ENCODE measurements at regions of chr16 and their contacts with region 1.

Region 1: DNA sequence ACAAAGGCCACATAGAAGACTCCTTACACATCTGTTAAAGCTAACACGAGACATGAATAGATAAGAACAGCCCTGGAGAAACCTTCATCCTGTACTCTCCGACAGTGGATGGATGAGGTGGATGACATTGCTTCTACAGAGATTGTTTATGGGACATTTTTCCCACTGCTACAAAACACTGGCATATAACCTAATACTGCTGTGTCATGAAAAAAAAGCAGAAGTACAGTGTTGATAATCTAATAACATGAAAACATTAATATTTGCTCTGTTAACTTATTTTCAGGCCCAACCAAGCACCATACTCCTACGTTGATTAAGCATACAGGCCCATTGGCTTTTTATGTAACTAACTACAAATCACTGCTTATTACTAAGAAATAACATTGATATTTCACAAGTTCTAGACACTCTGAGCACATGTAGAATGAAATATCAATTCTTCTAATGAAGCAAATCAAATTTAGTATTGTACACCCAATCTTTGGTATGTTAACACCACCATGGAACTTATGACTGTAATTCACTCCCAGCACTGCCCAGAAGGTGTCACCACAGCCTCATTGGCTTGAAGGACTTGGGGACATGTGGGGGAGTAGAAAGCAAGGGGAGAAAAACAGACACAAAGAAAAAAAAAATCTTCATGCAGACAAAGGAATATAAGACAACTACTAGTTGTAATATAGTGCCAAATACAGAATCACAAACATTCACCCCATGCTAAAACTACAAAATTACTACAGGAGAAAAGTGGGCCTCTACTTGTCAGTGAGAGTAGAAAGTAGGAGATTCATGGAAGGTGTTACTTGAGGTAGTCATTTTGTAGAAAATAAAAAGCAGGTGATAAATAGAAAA is 330.0 kb upstream of the PMFBP1 start:
- DNase-seq: peak; percentile 79
- ATAC-seq: peak; percentile 99
- H3K4me3 ChIP-seq: no peak overlapping the region
- H3K27ac ChIP-seq: no peak overlapping the region
- H3K4me1 ChIP-seq: no peaks in the 10 kb centered on the region
- H3K27me3 ChIP-seq: no peaks in the 10 kb centered on the region
- CTCF ChIP-seq: peak; percentile 96
- POLR2A ChIP-seq: 0 out of 2 replicates have a peak, but pooled peaks have one; percentile 35
- RAD21 ChIP-seq: peak; percentile 95

Region 2: GRCh38 chr16:72689851-72690250 is 187.9 kb after region 1 on chr16:
- CTCF ChIA-PET with region 1: no interaction called
- POLR2A ChIA-PET with region 1: no interaction called
- dilution Hi-C with region 1: no loop called
- in situ Hi-C with region 1: no loop called
- intact Hi-C with region 1: no loop called
- DNase-seq: peak; percentile 17
- ATAC-seq: no peak
- H3K4me3 ChIP-seq: no peak overlapping the region
- H3K27ac ChIP-seq: no peak overlapping the region
- H3K4me1 ChIP-seq: no peaks in the 10 kb centered on the region
- H3K27me3 ChIP-seq: no peaks in the 10 kb centered on the region
- CTCF ChIP-seq: 0 out of 2 replicates have a peak, but pooled peaks have one; percentile 18
- POLR2A ChIP-seq: no peak
- RAD21 ChIP-seq: peak; percentile 16; the same call in 1 of the 2 replicates

Region 3: GRCh38 chr16:72787514-72788268 is 285.7 kb after region 1 on chr16:
- CTCF ChIA-PET with region 1: no interaction called
- POLR2A ChIA-PET with region 1: no interaction called
- dilution Hi-C with region 1: no loop called
- in situ Hi-C with region 1: no loop called
- intact Hi-C with region 1: loop called (anchors 5 kb)
- DNase-seq: peak; percentile 94
- ATAC-seq: peak; percentile 87
- H3K4me3 ChIP-seq: peak overlapping the region; percentile 76
- H3K27ac ChIP-seq: peak overlapping the region; percentile 85
- H3K4me1 ChIP-seq: peaks cover 7% of the 10 kb centered on the region
- H3K27me3 ChIP-seq: no peaks in the 10 kb centered on the region
- CTCF ChIP-seq: no peak
- POLR2A ChIP-seq: no peak
- RAD21 ChIP-seq: no peak

Region 4: GRCh38 chr16:72847187-72848027 is 345.4 kb after region 1 on chr16:
- CTCF ChIA-PET with region 1: interaction called, 3 read pairs
- POLR2A ChIA-PET with region 1: no interaction called
- dilution Hi-C with region 1: no loop called
- in situ Hi-C with region 1: no loop called
- intact Hi-C with region 1: loop called (anchors 5 kb)
- DNase-seq: peak; percentile 36
- ATAC-seq: peak; percentile 50; the same call in 1 of the 2 replicates
- H3K4me3 ChIP-seq: no peak overlapping the region
- H3K27ac ChIP-seq: no peak overlapping the region
- H3K4me1 ChIP-seq: peaks cover 27% of the 10 kb centered on the region
- H3K27me3 ChIP-seq: no peaks in the 10 kb centered on the region
- CTCF ChIP-seq: peak; percentile 38
- POLR2A ChIP-seq: no peak
- RAD21 ChIP-seq: peak; percentile 53

Region 5: GRCh38 chr16:73196670-73197069 is 694.7 kb after region 1 on chr16:
- CTCF ChIA-PET with region 1: no interaction called
- POLR2A ChIA-PET with region 1: no interaction called
- dilution Hi-C with region 1: no loop called
- in situ Hi-C with region 1: no loop called
- intact Hi-C with region 1: loop called (anchors 1 kb)
- DNase-seq: peak; percentile 53
- ATAC-seq: peak; percentile 72
- H3K4me3 ChIP-seq: no peak overlapping the region
- H3K27ac ChIP-seq: no peak overlapping the region
- H3K4me1 ChIP-seq: no peaks in the 10 kb centered on the region
- H3K27me3 ChIP-seq: peaks cover 14% of the 10 kb centered on the region
- CTCF ChIP-seq: peak; percentile 60
- POLR2A ChIP-seq: no peak
- RAD21 ChIP-seq: peak; percentile 75

Region 6: GRCh38 chr16:73956587-73957494 is 1454.9 kb after region 1 on chr16:
- CTCF ChIA-PET with region 1: interaction called, 4 read pairs
- POLR2A ChIA-PET with region 1: no interaction called
- dilution Hi-C with region 1: no loop called
- in situ Hi-C with region 1: no loop called
- intact Hi-C with region 1: loop called (anchors 1 kb)
- DNase-seq: peak; percentile 64
- ATAC-seq: peak; percentile 92
- H3K4me3 ChIP-seq: no peak overlapping the region
- H3K27ac ChIP-seq: no peak overlapping the region
- H3K4me1 ChIP-seq: no peaks in the 10 kb centered on the region
- H3K27me3 ChIP-seq: no peaks in the 10 kb centered on the region
- CTCF ChIP-seq: peak; percentile 74
- POLR2A ChIP-seq: no peak
- RAD21 ChIP-seq: peak; percentile 73

Measured in IMR-90 (cell line).